ENCODE measurements at regions of chr4 and their contacts with region 1.

Region 1: DNA sequence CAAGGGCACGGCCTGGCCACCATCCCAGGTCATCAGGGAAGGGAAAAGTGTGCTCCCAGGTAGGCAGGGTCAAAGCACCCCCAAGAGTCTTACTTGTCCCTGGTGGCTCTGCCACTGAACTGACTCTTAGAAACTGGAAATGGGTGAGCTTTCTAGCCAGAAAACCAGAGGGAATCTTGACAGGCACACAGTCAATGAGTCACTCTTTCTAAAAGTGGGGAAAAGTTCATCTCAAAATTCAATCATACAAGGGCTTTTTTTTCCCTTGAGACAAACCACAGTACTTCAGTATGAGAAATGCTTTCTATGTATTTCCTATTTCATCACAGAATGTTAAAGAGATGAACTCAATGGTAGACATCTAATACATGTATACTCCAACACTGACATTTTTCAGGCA is 12.5 kb downstream of the HPF1 start:
- DNase-seq: no peak
- H3K4me3 ChIP-seq: no peak overlapping the region
- H3K27ac ChIP-seq: peak overlapping the region; percentile 16; the same call in 1 of the 2 replicates
- H3K4me1 ChIP-seq: peaks cover 18% of the 10 kb centered on the region
- H3K27me3 ChIP-seq: no peaks in the 10 kb centered on the region
- CTCF ChIP-seq: no peak

Region 2: DNA sequence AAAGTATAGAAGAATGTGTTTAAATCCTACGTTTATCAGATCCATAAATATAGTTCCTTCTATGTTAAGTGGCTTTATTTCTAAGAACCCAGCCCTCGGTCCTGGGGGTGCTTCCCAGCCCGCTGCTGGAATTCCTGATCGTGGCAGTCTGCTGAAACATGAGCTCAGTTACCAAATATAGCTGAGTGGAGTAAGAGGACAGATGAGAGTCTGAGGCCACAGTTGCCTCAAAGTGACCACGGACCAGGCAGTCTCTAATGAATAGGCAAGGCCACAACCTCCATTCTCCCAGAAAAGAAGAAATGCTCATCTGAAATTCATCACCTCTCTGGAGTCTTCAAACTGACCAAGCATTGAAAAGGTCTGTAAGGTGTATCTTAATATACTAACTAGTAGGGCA is 1248.5 kb before region 1 on chr4 and contains the start of gene PALLD:
- CTCF ChIA-PET with region 1: no interaction called
- POLR2A ChIA-PET with region 1: no interaction called
- intact Hi-C with region 1: no loop called
- DNase-seq: peak in 1 of 2 experiments; percentile 34
- H3K4me3 ChIP-seq: no peak within 1 kb of the TSS
- H3K27ac ChIP-seq: no peak within 1 kb of the TSS
- H3K4me1 ChIP-seq: peaks cover 12% of the 10 kb centered on the region
- H3K27me3 ChIP-seq: no peaks in the 10 kb centered on the region
- CTCF ChIP-seq: no peak
- total RNA-seq, gene PALLD: 139 and 156 TPM in 2 replicates

Region 3: GRCh38 chr4:169640261-169640870 is 104.9 kb before region 1 on chr4:
- CTCF ChIA-PET with region 1: interaction called, 11 read pairs
- POLR2A ChIA-PET with region 1: no interaction called
- intact Hi-C with region 1: no loop called
- DNase-seq: no peak
- H3K4me3 ChIP-seq: no peak overlapping the region
- H3K27ac ChIP-seq: no peak overlapping the region
- H3K4me1 ChIP-seq: peaks cover 3% of the 10 kb centered on the region
- H3K27me3 ChIP-seq: no peaks in the 10 kb centered on the region
- CTCF ChIP-seq: no peak

Region 4: GRCh38 chr4:169899295-169899694 is 154.0 kb after region 1 on chr4:
- CTCF ChIA-PET with region 1: no interaction called
- POLR2A ChIA-PET with region 1: no interaction called
- intact Hi-C with region 1: no loop called
- DNase-seq: peak; percentile 20 to 57
- H3K4me3 ChIP-seq: no peak overlapping the region
- H3K27ac ChIP-seq: no peak overlapping the region
- H3K4me1 ChIP-seq: no peaks in the 10 kb centered on the region; the same call in 1 of the 2 replicates
- H3K27me3 ChIP-seq: no peaks in the 10 kb centered on the region
- CTCF ChIP-seq: no peak

Region 5: DNA sequence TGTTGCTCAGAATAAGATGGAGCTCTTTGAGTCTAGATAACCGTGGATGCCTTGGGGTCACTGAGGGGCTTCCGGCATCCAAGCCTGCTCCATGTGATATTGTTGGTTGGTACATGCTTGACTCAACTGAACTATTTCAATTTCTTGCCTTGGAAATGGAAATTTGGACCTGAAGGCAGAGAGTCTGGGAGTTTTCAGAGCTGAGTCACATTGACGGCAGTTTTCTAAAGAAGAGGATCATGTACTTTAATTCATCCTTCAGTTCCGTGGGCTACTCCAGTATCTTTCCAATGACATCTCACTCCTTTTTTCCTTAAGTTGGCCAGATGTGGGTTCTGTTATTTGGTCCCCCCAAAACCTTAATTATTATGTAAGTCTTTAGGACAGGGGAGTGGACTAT is 180.4 kb after region 1 on chr4:
- CTCF ChIA-PET with region 1: no interaction called
- POLR2A ChIA-PET with region 1: no interaction called
- intact Hi-C with region 1: no loop called
- DNase-seq: no peak
- H3K4me3 ChIP-seq: no peak overlapping the region
- H3K27ac ChIP-seq: no peak overlapping the region
- H3K4me1 ChIP-seq: no peaks in the 10 kb centered on the region
- H3K27me3 ChIP-seq: no peaks in the 10 kb centered on the region
- CTCF ChIP-seq: no peak

Region 6: DNA sequence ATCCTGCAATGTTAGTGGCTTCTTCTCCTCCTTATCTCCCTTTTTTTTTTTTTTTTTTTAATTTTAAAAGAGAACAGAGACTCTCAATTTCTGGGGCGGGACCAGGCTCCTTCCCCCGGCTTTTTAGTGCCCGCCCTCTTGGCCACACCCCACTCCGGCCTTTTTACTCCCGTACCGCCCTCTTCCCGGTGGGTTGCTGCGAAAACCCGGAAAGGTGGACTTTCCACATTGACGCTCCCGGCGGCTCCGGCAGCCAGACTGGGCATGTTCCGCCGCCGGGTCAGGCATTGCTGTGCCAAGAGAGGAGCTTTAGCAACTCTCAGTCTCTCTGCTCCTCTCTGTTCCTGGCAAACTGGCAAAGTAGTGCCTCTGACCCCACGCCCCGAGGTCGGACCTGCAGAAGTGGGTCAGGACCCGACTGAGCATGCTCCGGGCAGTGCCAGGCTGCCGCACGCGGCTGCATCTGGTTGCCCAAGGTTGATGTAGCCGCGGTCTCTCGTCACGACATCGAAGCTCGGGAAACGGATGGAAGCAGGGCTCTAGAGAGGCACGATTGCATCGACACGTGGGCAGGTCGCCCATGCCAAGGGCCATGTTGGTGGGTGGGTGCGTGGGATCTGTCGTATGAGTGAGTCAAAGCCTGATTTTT is 282.0 kb after region 1 on chr4:
- CTCF ChIA-PET with region 1: no interaction called
- POLR2A ChIA-PET with region 1: interaction called, 12 read pairs
- intact Hi-C with region 1: no loop called
- DNase-seq: peak; percentile 63 to 92
- H3K4me3 ChIP-seq: peak overlapping the region; percentile 75; the same call in 1 of the 2 replicates
- H3K27ac ChIP-seq: peak overlapping the region; percentile 50; the same call in 1 of the 2 replicates
- H3K4me1 ChIP-seq: no peaks in the 10 kb centered on the region
- H3K27me3 ChIP-seq: no peaks in the 10 kb centered on the region
- CTCF ChIP-seq: no peak

Measured in PC-9 (cell line).